Naive thymus-derived CD8-positive, alpha-beta T cell (primary cell): ENCODE measurements at regions of chr14 and their contacts with region 1.

Region 1: GRCh38 chr14:93939304-93940229 is 12.4 kb downstream of the FAM181A start:
- DNase-seq: peak; percentile 74 to 93 (median 88)
- ATAC-seq: peak; percentile 96 to 99
- H3K4me3 Mint-ChIP-seq: peak overlapping the region; percentile 39 to 81 (median 62)
- H3K27ac Mint-ChIP-seq: no peak overlapping the region
- H3K4me1 Mint-ChIP-seq: peaks cover 0 to 12% (median 3%) of the 10 kb centered on the region in 4 donors
- H3K27me3 Mint-ChIP-seq: peaks cover 5 to 22% (median 11%) of the 10 kb centered on the region in 5 donors

Region 2: GRCh38 chr14:93909429-93910128 is 30.0 kb before region 1 on chr14:
- POLR2A ChIA-PET with region 1: no interaction called
- DNase-seq: no peak
- ATAC-seq: no peak
- H3K4me3 Mint-ChIP-seq: no peak overlapping the region
- H3K27ac Mint-ChIP-seq: no peak overlapping the region
- H3K4me1 Mint-ChIP-seq: peaks cover 0 to 2% (median under 1%) of the 10 kb centered on the region in 4 donors
- H3K27me3 Mint-ChIP-seq: peaks cover 0 to 17% (median 5%) of the 10 kb centered on the region in 5 donors

Region 3: GRCh38 chr14:93926873-93927799 is 12.4 kb before region 1 on chr14 and contains the start of gene FAM181A:
- POLR2A ChIA-PET with region 1: no interaction called
- DNase-seq: peak in 1 of 10 donors; percentile 52
- ATAC-seq: no peak
- H3K4me3 Mint-ChIP-seq: no peak within 1 kb of the TSS
- H3K27ac Mint-ChIP-seq: no peak within 1 kb of the TSS
- H3K4me1 Mint-ChIP-seq: no peaks in the 10 kb centered on the region
- H3K27me3 Mint-ChIP-seq: no peaks in the 10 kb centered on the region
- polyA plus RNA-seq, gene FAM181A: not detected

Region 4: GRCh38 chr14:93959239-93960107 is 19.9 kb after region 1 on chr14:
- POLR2A ChIA-PET with region 1: interaction called, 10 read pairs
- DNase-seq: peak; percentile 64 to 92 (median 81)
- ATAC-seq: peak; percentile 87 to 89
- H3K4me3 Mint-ChIP-seq: peak overlapping the region; percentile 47 to 83 (median 74)
- H3K27ac Mint-ChIP-seq: peak overlapping the region; percentile 79 to 96 (median 86)
- H3K4me1 Mint-ChIP-seq: peaks cover 56 to 96% (median 88%) of the 10 kb centered on the region in 4 donors
- H3K27me3 Mint-ChIP-seq: peaks cover 0 to 3% (median 0%) of the 10 kb centered on the region in 5 donors